Endothelial cell of umbilical vein (primary cell): ENCODE measurements at regions of chr1 and their contacts with region 1.

Region 1: GRCh38 chr1:31617917-31618660 is 600 bp downstream of the HCRTR1 start:
- DNase-seq: peak; percentile 59
- H3K4me3 ChIP-seq: peak overlapping the region; percentile 39 to 58 (median 54)
- H3K27ac ChIP-seq: no peak overlapping the region
- H3K4me1 ChIP-seq: no peaks in the 10 kb centered on the region
- H3K27me3 ChIP-seq: peaks cover 0 to 1% of the 10 kb centered on the region in 2 experiments
- CTCF ChIP-seq: peak; percentile 73 to 97
- POLR2A ChIP-seq: no peak

Region 2: GRCh38 chr1:31394628-31395193 is 223.4 kb before region 1 on chr1:
- CTCF ChIA-PET with region 1: interaction called, 3 read pairs
- POLR2A ChIA-PET with region 1: no interaction called
- dilution Hi-C with region 1: no loop called
- intact Hi-C with region 1: loop called (anchors 10 kb)
- DNase-seq: peak; percentile 71
- H3K4me3 ChIP-seq: no peak overlapping the region
- H3K27ac ChIP-seq: no peak overlapping the region
- H3K4me1 ChIP-seq: peaks cover 5% of the 10 kb centered on the region
- H3K27me3 ChIP-seq: no peaks in the 10 kb centered on the region
- CTCF ChIP-seq: peak; percentile 90 to 96
- POLR2A ChIP-seq: no peak

Region 3: DNA sequence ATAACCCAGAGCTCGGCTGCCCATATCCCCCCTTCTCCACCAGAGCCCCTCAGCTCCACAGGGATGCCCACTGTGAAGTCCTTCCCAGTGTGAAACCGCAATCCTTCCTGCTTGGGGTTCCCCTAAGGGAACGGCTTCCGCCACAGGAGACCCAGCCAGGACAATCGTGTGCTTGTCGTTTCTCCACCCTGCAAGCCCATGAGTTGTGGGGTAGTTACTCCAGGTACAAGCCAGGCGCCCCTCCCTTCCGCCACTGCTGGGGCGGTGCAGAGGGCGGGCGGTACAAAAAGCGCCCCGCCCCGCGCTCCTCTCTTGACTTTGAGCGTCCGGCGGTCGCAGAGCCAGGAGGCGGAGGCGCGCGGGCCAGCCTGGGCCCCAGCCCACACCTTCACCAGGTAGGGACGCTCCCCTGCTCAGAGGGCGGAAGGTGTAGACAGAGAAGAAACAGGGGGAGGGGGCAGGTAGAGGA is 41.9 kb before region 1 on chr1 and contains the start of gene TINAGL1:
- CTCF ChIA-PET with region 1: interaction called, 15 read pairs
- POLR2A ChIA-PET with region 1: interaction called, 3 read pairs
- dilution Hi-C with region 1: no loop called
- intact Hi-C with region 1: no loop called
- DNase-seq: peak; percentile 48
- H3K4me3 ChIP-seq: peak within 1 kb of the TSS; percentile 76 to 90 (median 87)
- H3K27ac ChIP-seq: peak within 1 kb of the TSS; percentile 88
- H3K4me1 ChIP-seq: peaks cover 61% of the 10 kb centered on the region
- H3K27me3 ChIP-seq: no peaks in the 10 kb centered on the region
- CTCF ChIP-seq: no peak
- POLR2A ChIP-seq: peak; percentile 71
- total RNA-seq, gene TINAGL1: 298 and 312 TPM in 2 replicates

Region 4: GRCh38 chr1:31593770-31594632 is 24.1 kb before region 1 on chr1:
- CTCF ChIA-PET with region 1: interaction called, 33 read pairs
- POLR2A ChIA-PET with region 1: no interaction called
- dilution Hi-C with region 1: no loop called
- intact Hi-C with region 1: loop called (anchors 2 kb)
- DNase-seq: peak; percentile 73
- H3K4me3 ChIP-seq: no peak overlapping the region
- H3K27ac ChIP-seq: no peak overlapping the region
- H3K4me1 ChIP-seq: peaks cover 28% of the 10 kb centered on the region
- H3K27me3 ChIP-seq: no peaks in the 10 kb centered on the region
- CTCF ChIP-seq: peak; percentile 95 to 96
- POLR2A ChIP-seq: no peak